ENCODE measurements at regions of chrX and their contacts with region 1.

Region 1: DNA sequence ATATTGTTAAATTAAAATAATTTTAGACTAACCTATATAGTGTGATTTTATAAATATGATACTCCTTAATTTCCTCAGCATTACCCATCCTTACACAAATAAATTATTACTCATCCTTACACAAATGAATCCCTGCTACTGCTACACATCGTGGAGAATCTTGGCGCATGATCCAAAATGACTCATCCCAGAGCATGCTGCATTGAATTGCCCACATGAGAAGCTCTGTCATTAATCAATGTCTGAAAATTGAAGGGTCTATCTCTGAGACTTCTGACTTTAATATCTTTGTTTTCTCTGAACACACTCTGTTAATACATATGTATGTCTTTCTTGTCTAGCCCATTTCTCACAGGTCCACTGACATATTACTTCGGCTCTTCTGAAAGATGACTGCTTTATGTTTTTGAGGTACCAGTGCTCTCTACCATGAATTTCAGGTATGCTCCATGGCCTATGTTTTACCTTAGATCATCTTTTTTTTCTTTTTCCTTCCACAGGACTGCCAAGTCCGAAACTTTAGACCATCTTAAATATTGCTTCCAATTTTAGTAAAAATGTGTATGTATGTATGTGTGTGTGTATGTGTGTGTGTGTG is 15.7 kb upstream of the DUSP21 start:
- DNase-seq: peak; percentile 94
- ATAC-seq: peak; percentile 99
- H3K4me3 ChIP-seq: no peak overlapping the region
- H3K27ac ChIP-seq: peak overlapping the region; percentile 53
- H3K4me1 ChIP-seq: peaks cover 12% of the 10 kb centered on the region
- H3K27me3 ChIP-seq: no peaks in the 10 kb centered on the region
- CTCF ChIP-seq: no peak

Region 2: DNA sequence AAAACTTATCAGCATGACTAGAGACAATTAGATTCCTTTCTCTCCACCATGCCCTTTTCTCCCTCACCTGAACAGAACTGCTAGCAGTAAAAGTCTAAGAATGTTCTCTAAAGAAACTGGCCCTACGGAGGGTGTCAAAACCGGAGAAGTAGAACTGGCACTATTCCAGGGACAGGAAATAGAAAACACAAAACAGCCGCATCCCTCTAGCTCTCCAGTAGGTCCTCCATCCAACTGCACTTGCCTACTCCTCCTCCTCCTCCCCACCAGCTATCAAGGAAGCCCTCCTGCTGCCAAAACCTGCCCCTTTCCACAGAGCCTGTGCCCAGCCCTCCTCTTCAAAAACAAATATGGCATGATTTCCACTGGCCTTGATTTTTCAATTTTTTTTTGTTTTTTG is 313.8 kb before region 1 on chrX:
- CTCF ChIA-PET with region 1: no interaction called
- POLR2A ChIA-PET with region 1: no interaction called
- intact Hi-C with region 1: no loop called
- DNase-seq: no peak
- ATAC-seq: no peak
- H3K4me3 ChIP-seq: no peak overlapping the region
- H3K27ac ChIP-seq: no peak overlapping the region
- H3K4me1 ChIP-seq: no peaks in the 10 kb centered on the region
- H3K27me3 ChIP-seq: no peaks in the 10 kb centered on the region
- CTCF ChIP-seq: no peak

Region 3: DNA sequence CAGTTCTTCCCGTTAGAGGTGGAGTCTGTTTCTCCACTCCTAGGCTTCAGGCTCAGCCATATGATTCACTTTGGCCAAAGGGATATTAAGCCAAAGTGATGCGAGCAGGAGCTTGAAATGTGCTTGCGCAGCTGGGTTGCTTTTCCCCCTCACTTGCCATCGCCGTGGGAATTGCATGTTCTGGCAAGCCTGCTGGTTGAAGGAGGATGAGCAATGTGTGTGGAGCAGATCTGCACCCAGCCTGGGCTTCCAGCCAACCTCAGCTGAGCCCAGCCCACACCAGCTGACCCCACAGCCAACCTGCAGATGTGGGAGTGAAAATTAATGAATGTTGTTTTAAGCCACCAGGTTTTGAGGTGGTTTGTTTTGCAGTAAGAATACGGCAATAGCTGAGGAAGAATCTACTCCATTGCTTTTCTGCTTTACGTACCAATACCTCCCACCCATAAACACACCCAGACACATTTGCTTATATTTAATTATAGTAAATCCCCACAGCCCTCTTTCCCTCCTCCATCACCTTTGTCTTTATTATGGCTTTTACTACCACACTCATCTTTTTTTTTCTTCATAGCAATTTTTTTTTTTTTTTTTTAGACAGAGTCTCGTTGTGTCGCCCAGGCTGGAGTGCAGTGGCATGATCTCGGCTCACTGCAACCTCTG is 152.6 kb before region 1 on chrX:
- CTCF ChIA-PET with region 1: no interaction called
- POLR2A ChIA-PET with region 1: no interaction called
- intact Hi-C with region 1: loop called (anchors 10 kb)
- DNase-seq: peak; percentile 53
- ATAC-seq: peak; percentile 72
- H3K4me3 ChIP-seq: no peak overlapping the region
- H3K27ac ChIP-seq: no peak overlapping the region
- H3K4me1 ChIP-seq: no peaks in the 10 kb centered on the region
- H3K27me3 ChIP-seq: no peaks in the 10 kb centered on the region
- CTCF ChIP-seq: no peak

Region 4: GRCh38 chrX:45068569-45068968 is 240.5 kb after region 1 on chrX:
- CTCF ChIA-PET with region 1: no interaction called
- POLR2A ChIA-PET with region 1: no interaction called
- intact Hi-C with region 1: no loop called
- DNase-seq: no peak
- ATAC-seq: no peak
- H3K4me3 ChIP-seq: no peak overlapping the region
- H3K27ac ChIP-seq: no peak overlapping the region
- H3K4me1 ChIP-seq: peaks cover 22% of the 10 kb centered on the region
- H3K27me3 ChIP-seq: no peaks in the 10 kb centered on the region
- CTCF ChIP-seq: no peak